ENCODE measurements at regions of chr2 and their contacts with region 1.

Region 1: DNA sequence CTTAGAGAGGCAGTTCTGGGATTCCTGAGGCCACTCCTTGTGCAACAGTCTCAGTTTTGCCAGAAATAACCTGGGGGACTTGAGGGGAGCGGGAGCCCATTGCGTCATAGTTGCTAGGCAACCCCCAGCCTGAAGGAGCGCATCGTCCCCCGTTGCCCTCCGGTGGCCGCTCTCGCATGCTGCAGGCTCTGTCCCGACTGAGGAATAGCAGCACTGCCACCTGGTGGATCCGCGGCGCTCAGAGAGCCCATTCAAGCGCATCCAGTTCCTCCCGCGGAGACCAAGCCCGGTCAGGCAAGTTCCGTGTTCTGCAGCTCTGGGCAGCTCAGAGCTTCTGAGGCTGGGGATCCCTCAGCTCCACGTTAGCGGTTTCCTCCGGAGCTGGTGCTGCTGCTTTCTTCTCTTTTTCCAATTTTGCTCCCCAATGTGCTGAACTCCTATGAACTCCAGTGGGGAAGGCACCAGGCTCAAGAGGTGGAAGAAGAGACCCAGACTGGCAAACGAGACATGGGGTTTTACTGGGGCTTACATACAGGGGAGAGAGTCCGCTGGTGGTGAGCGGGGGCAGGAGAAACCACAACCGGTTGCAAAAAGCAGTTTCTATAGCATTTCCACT is 15.1 kb downstream of the SLC4A3 start:
- DNase-seq: peak; percentile 93
- H3K4me3 Mint-ChIP-seq: no peak overlapping the region
- H3K27ac Mint-ChIP-seq: no peak overlapping the region
- H3K4me1 Mint-ChIP-seq: peaks cover 7% of the 10 kb centered on the region
- H3K27me3 Mint-ChIP-seq: peaks cover 9% of the 10 kb centered on the region

Region 2: GRCh38 chr2:219597552-219598307 is 44.8 kb before region 1 on chr2 and contains the start of gene STK11IP:
- CTCF ChIA-PET with region 1: interaction called, 5 read pairs
- POLR2A ChIA-PET with region 1: no interaction called
- intact Hi-C with region 1: loop called (anchors 2 kb)
- DNase-seq: peak; percentile 96
- H3K4me3 Mint-ChIP-seq: peak within 1 kb of the TSS; percentile 88
- H3K27ac Mint-ChIP-seq: peak within 1 kb of the TSS; percentile 93
- H3K4me1 Mint-ChIP-seq: peaks cover 10% of the 10 kb centered on the region
- H3K27me3 Mint-ChIP-seq: peaks cover 4% of the 10 kb centered on the region
- total RNA-seq, gene STK11IP: 28.7 to 28.9 TPM

Region 3: GRCh38 chr2:219629976-219630670 is 12.4 kb before region 1 on chr2:
- CTCF ChIA-PET with region 1: interaction called, 15 read pairs
- POLR2A ChIA-PET with region 1: no interaction called
- intact Hi-C with region 1: no loop called
- DNase-seq: no peak
- H3K4me3 Mint-ChIP-seq: no peak overlapping the region
- H3K27ac Mint-ChIP-seq: no peak overlapping the region
- H3K4me1 Mint-ChIP-seq: peaks cover 4% of the 10 kb centered on the region
- H3K27me3 Mint-ChIP-seq: peaks cover 15% of the 10 kb centered on the region

Region 4: DNA sequence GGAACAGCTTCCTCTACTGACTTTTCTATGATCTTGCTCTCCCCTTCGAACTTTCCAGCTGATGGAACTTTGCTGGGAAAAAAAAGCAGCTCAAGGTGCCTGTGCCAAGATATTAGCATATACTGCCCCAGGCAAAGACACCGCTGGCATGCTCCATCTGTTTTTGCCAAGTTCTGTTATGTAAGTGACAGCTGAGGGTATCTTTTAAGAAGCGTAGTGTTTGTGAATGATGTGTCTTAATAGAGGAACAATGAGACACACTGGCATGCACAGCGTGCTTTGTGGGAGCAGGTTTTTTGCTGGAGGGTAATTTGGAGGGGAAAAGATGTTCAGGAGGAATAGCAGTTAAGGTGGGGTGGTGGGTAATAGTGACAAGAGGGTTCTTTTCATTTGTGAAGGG is 32.6 kb after region 1 on chr2:
- CTCF ChIA-PET with region 1: no interaction called
- POLR2A ChIA-PET with region 1: no interaction called
- intact Hi-C with region 1: no loop called
- DNase-seq: no peak
- H3K4me3 Mint-ChIP-seq: no peak overlapping the region
- H3K27ac Mint-ChIP-seq: no peak overlapping the region
- H3K4me1 Mint-ChIP-seq: no peaks in the 10 kb centered on the region
- H3K27me3 Mint-ChIP-seq: peaks cover 18% of the 10 kb centered on the region